H1 (cell line): ENCODE measurements at regions of chr17 and their contacts with region 1.

Region 1: GRCh38 chr17:76868176-76868668 is at the start of gene MGAT5B:
- DNase-seq: peak; percentile 67 to 95
- H3K4me3 ChIP-seq: peak within 1 kb of the TSS; percentile 35 to 80 (median 58)
- H3K27ac ChIP-seq: no peak within 1 kb of the TSS
- H3K4me1 ChIP-seq: peaks cover 5 to 17% (median 11%) of the 10 kb centered on the region in 4 experiments; a peak in 6 of 7 replicates
- H3K27me3 ChIP-seq: peaks cover 4 to 26% (median 17%) of the 10 kb centered on the region in 4 experiments; a peak in 6 of 7 replicates
- CTCF ChIP-seq: peak; percentile 89 to 98 (median 95)
- EP300 ChIP-seq: no peak
- POLR2A ChIP-seq: no peak
- RAD21 ChIP-seq: peak; percentile 80 to 98
- total RNA-seq, gene MGAT5B: 8.2 and 9.3 TPM in 2 replicates

Region 2: GRCh38 chr17:76834870-76835269 is 33.4 kb before region 1 on chr17:
- CTCF ChIA-PET with region 1: no interaction called
- POLR2A ChIA-PET with region 1: no interaction called
- DNase-seq: no peak
- H3K4me3 ChIP-seq: no peak overlapping the region
- H3K27ac ChIP-seq: no peak overlapping the region
- H3K4me1 ChIP-seq: peaks cover 0 to 6% (median 3%) of the 10 kb centered on the region in 4 experiments; a peak in 6 of 7 replicates
- H3K27me3 ChIP-seq: peaks cover 0 to 3% (median under 1%) of the 10 kb centered on the region in 4 experiments; a peak in 3 of 7 replicates
- CTCF ChIP-seq: no peak
- EP300 ChIP-seq: no peak
- POLR2A ChIP-seq: no peak
- RAD21 ChIP-seq: no peak

Region 3: DNA sequence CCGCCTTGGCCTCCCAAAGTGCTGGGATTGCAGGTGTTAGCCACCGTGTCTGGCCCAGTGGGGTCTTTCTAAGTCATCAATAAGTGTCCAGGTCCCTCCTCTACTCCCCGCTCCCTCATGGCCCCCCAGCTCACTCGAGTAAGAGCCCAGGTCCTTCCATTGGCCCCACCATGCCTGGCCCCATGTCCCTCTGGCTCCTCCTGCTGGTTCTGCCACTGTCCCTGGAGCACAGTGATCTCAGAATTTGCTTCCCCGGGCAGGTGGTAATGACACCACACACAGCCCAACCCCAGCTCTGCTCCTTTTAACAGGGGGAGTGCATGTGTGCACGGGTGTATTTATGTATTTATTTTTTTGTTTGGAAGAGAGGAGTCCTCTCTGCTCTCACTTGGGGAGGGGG is 19.6 kb after region 1 on chr17:
- CTCF ChIA-PET with region 1: interaction called, 70 read pairs
- POLR2A ChIA-PET with region 1: interaction called, 3 read pairs
- DNase-seq: no peak
- H3K4me3 ChIP-seq: no peak overlapping the region
- H3K27ac ChIP-seq: no peak overlapping the region
- H3K4me1 ChIP-seq: peaks cover 0 to 13% (median 7%) of the 10 kb centered on the region in 4 experiments; a peak in 6 of 7 replicates
- H3K27me3 ChIP-seq: no peaks in the 10 kb centered on the region
- CTCF ChIP-seq: peak; percentile 35 to 66 (median 65)
- EP300 ChIP-seq: no peak
- POLR2A ChIP-seq: no peak
- RAD21 ChIP-seq: peak; percentile 22 to 57; a peak in 3 of 4 replicates

Region 4: GRCh38 chr17:76901542-76902197 is 33.4 kb after region 1 on chr17:
- CTCF ChIA-PET with region 1: no interaction called
- POLR2A ChIA-PET with region 1: no interaction called
- DNase-seq: no peak
- H3K4me3 ChIP-seq: no peak overlapping the region
- H3K27ac ChIP-seq: no peak overlapping the region
- H3K4me1 ChIP-seq: peaks cover 0 to 5% (median 0%) of the 10 kb centered on the region in 4 experiments; a peak in 1 of 7 replicates
- H3K27me3 ChIP-seq: peaks cover 0 to 2% (median 0%) of the 10 kb centered on the region in 4 experiments; a peak in 1 of 7 replicates
- CTCF ChIP-seq: no peak
- EP300 ChIP-seq: no peak
- POLR2A ChIP-seq: no peak
- RAD21 ChIP-seq: no peak

Region 5: GRCh38 chr17:76924345-76925342 is 56.4 kb after region 1 on chr17:
- CTCF ChIA-PET with region 1: interaction called, 19 read pairs
- POLR2A ChIA-PET with region 1: interaction called, 3 read pairs
- DNase-seq: no peak
- H3K4me3 ChIP-seq: no peak overlapping the region
- H3K27ac ChIP-seq: no peak overlapping the region
- H3K4me1 ChIP-seq: peaks cover 0 to 5% (median 1%) of the 10 kb centered on the region in 4 experiments; a peak in 3 of 7 replicates
- H3K27me3 ChIP-seq: no peaks in the 10 kb centered on the region
- CTCF ChIP-seq: no peak
- EP300 ChIP-seq: no peak
- POLR2A ChIP-seq: no peak
- RAD21 ChIP-seq: no peak

Region 6: GRCh38 chr17:76940738-76941350 is 72.6 kb after region 1 on chr17:
- CTCF ChIA-PET with region 1: interaction called, 10 read pairs
- POLR2A ChIA-PET with region 1: no interaction called
- DNase-seq: peak; percentile 39 to 93
- H3K4me3 ChIP-seq: no peak overlapping the region
- H3K27ac ChIP-seq: no peak overlapping the region
- H3K4me1 ChIP-seq: peaks cover 0 to 18% (median 8%) of the 10 kb centered on the region in 4 experiments; a peak in 4 of 7 replicates
- H3K27me3 ChIP-seq: no peaks in the 10 kb centered on the region
- CTCF ChIP-seq: peak; percentile 73 to 79 (median 75)
- EP300 ChIP-seq: no peak
- POLR2A ChIP-seq: no peak
- RAD21 ChIP-seq: peak; percentile 80 to 86

Region 7: DNA sequence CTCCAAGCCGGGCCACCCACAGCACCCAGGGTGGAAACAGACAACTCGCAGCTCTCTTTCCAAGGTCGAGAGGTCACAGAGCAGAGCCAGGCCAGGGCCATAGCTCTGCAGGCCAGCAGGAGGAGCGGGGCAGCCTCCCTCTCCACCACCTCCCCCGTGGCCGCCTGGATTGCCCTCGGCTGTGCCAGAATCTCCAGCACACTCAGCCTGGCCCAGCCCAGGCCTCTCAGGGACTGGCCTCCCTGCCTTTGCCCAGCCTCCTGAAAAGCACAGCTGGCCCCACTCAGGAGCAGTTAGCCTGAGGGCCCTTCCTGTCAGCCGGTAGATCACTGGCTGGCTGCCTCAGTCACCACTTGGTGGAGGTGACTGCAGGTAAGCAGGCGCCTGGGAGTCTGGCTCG is 186.7 kb after region 1 on chr17:
- CTCF ChIA-PET with region 1: interaction called, 19 read pairs
- POLR2A ChIA-PET with region 1: no interaction called
- DNase-seq: no peak
- H3K4me3 ChIP-seq: no peak overlapping the region
- H3K27ac ChIP-seq: no peak overlapping the region
- H3K4me1 ChIP-seq: peaks cover 0 to 2% (median 0%) of the 10 kb centered on the region in 4 experiments; a peak in 3 of 7 replicates
- H3K27me3 ChIP-seq: no peaks in the 10 kb centered on the region
- CTCF ChIP-seq: peak in 1 of 3 experiments; percentile 17; a peak in 1 of 4 replicates
- EP300 ChIP-seq: no peak
- POLR2A ChIP-seq: no peak
- RAD21 ChIP-seq: no peak

Region 8: DNA sequence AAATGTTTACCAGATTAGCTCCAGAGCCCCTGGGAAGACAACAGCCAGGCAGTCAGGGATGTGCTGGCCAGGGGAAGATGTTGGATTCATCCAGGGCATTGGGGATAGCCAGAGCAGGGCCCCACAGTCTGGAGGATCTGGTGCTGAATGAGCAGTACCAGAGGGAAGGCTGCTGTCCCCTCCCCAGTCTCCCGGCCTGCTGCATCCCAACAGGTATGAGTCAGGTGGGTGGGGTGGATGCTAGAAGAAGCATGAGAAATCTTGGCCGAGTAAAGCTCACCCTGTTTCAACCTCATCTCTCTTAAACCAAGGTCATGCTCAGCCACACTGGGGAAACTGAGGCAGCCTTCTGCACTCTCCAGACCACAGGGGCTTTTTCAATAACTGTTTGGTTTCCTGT is 200.7 kb after region 1 on chr17:
- CTCF ChIA-PET with region 1: interaction called, 19 read pairs
- POLR2A ChIA-PET with region 1: no interaction called
- DNase-seq: no peak
- H3K4me3 ChIP-seq: no peak overlapping the region
- H3K27ac ChIP-seq: no peak overlapping the region
- H3K4me1 ChIP-seq: peaks cover 0 to 3% (median 0%) of the 10 kb centered on the region in 4 experiments; a peak in 3 of 7 replicates
- H3K27me3 ChIP-seq: no peaks in the 10 kb centered on the region
- CTCF ChIP-seq: no peak
- EP300 ChIP-seq: no peak
- POLR2A ChIP-seq: no peak
- RAD21 ChIP-seq: no peak